ENCODE measurements at regions of chr20 and their contacts with region 1.

Region 1: DNA sequence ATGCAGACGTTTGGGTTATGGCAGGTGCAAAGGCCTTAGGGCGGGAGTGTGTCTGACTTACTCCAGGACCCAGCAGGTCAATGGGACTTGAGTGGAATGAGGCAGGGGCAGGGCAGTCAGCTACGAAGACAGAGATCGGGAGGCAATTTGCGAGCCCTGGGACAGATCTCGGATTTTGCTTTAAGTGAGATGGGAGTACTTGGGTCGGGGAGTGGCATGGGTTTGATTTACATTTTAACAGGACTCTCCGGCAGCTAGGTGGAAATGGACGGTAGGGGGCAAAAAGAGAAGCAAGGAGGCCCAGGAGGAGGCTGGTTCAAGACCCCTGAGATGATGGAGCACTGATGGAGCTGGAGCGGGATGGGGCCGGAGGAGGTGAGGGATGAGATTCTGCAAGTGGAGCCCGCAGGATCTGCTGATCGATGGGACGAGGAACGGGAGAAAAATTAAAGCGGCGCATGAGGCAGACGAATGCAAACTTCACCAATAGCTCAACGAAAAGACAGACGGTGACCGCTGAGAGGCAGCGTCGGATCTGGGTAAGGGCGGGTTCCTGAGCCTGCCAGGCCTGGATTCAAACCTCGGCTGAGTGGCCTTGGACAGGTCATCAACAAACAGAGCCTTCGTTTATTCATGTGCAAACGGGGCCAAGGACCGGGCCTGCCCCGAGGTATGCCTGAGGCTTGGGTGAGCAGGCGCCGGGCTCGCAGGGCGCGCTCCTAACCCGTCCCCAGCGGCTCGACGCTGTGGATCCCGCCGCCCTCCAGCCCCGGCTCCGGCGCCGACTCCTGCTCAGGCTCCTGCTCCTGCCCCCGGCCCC is 756 bp upstream of the RBCK1 start:
- DNase-seq: peak in 2 of 5 donors; percentile 26 to 75
- H3K4me3 ChIP-seq: peak overlapping the region; percentile 37 to 48
- H3K4me3 Mint-ChIP-seq: peak overlapping the region; percentile 88 to 93 (median 91)
- H3K27ac ChIP-seq: peak overlapping the region; percentile 63
- H3K27ac Mint-ChIP-seq: peak overlapping the region; percentile 91 to 98 (median 97)
- H3K4me1 ChIP-seq: peaks cover 35% of the 10 kb centered on the region
- H3K4me1 Mint-ChIP-seq: peaks cover 32 to 50% (median 44%) of the 10 kb centered on the region in 4 donors
- H3K27me3 ChIP-seq: no peaks in the 10 kb centered on the region
- H3K27me3 Mint-ChIP-seq: no peaks in the 10 kb centered on the region

Region 2: GRCh38 chr20:335686-336439 is 71.5 kb before region 1 on chr20:
- CTCF ChIA-PET with region 1: no interaction called
- POLR2A ChIA-PET with region 1: no interaction called
- intact Hi-C with region 1: no loop called
- DNase-seq: no peak
- H3K4me3 ChIP-seq: no peak overlapping the region
- H3K4me3 Mint-ChIP-seq: no peak overlapping the region
- H3K27ac ChIP-seq: no peak overlapping the region
- H3K27ac Mint-ChIP-seq: peak overlapping the region in 1 of 7 donors; percentile 65
- H3K4me1 ChIP-seq: no peaks in the 10 kb centered on the region
- H3K4me1 Mint-ChIP-seq: no peaks in the 10 kb centered on the region
- H3K27me3 ChIP-seq: no peaks in the 10 kb centered on the region
- H3K27me3 Mint-ChIP-seq: no peaks in the 10 kb centered on the region

Region 3: DNA sequence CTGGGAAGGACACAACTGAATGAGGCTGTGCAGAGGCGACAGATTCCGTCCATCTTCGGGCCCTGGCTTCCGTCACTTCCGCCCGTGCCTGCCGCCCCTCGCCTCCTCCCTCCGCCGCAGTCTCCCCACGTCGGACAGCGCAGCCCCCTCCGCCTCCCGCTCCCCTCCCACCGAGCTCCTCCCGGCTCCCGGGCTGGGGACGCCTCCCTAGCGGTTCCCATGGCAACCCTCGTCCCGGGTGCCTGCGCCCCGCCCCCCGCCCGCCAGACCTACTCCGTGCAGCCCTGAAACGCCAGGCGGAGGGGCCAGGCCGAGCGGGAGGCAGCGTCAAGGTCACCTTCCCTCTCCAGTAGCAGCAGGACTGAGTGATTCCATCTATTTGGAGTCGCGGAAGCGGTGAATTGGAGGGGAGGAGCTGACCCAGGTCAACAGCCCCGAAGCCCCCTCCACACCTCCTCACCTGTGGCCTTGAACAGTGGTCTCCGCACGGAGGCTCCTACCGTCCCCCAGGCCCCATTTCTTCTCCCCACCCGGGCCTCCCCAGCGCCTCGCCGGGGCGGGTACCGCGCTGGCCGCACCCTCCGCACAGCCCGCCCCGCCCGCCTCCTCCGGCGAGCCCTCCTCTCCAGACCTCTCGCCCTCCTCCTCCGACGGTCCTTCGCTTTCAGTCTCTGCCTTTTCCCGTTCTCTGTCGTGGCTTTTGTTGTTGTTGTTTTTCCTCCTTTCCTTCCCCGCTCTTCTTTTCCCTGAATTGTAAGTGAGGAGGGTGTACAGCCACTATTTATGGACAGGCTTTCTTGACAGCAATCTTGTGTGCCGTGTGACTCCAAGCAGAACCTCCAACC is 59.5 kb before region 1 on chr20:
- CTCF ChIA-PET with region 1: no interaction called
- POLR2A ChIA-PET with region 1: no interaction called
- intact Hi-C with region 1: loop called (anchors 1 kb)
- DNase-seq: peak; percentile 32 to 62 (median 36)
- H3K4me3 ChIP-seq: peak overlapping the region; percentile 57 to 81
- H3K4me3 Mint-ChIP-seq: peak overlapping the region; percentile 80 to 92 (median 89)
- H3K27ac ChIP-seq: peak overlapping the region; percentile 18
- H3K27ac Mint-ChIP-seq: peak overlapping the region in 6 of 7 donors; percentile 6 to 89 (median 60)
- H3K4me1 ChIP-seq: peaks cover 16% of the 10 kb centered on the region
- H3K4me1 Mint-ChIP-seq: peaks cover 10 to 16% (median 13%) of the 10 kb centered on the region in 4 donors
- H3K27me3 ChIP-seq: no peaks in the 10 kb centered on the region
- H3K27me3 Mint-ChIP-seq: no peaks in the 10 kb centered on the region

Region 4: GRCh38 chr20:381581-382290 is 25.6 kb before region 1 on chr20:
- CTCF ChIA-PET with region 1: interaction called, 4 read pairs
- POLR2A ChIA-PET with region 1: interaction called, 13 read pairs
- intact Hi-C with region 1: loop called (anchors 1 kb)
- DNase-seq: peak; percentile 60 to 81 (median 67)
- H3K4me3 ChIP-seq: peak overlapping the region; percentile 29 to 62
- H3K4me3 Mint-ChIP-seq: peak overlapping the region; percentile 79 to 89 (median 85)
- H3K27ac ChIP-seq: no peak overlapping the region
- H3K27ac Mint-ChIP-seq: peak overlapping the region; percentile 73 to 90 (median 84)
- H3K4me1 ChIP-seq: peaks cover 8% of the 10 kb centered on the region
- H3K4me1 Mint-ChIP-seq: peaks cover 5 to 20% (median 8%) of the 10 kb centered on the region in 4 donors
- H3K27me3 ChIP-seq: no peaks in the 10 kb centered on the region
- H3K27me3 Mint-ChIP-seq: no peaks in the 10 kb centered on the region

Region 5: DNA sequence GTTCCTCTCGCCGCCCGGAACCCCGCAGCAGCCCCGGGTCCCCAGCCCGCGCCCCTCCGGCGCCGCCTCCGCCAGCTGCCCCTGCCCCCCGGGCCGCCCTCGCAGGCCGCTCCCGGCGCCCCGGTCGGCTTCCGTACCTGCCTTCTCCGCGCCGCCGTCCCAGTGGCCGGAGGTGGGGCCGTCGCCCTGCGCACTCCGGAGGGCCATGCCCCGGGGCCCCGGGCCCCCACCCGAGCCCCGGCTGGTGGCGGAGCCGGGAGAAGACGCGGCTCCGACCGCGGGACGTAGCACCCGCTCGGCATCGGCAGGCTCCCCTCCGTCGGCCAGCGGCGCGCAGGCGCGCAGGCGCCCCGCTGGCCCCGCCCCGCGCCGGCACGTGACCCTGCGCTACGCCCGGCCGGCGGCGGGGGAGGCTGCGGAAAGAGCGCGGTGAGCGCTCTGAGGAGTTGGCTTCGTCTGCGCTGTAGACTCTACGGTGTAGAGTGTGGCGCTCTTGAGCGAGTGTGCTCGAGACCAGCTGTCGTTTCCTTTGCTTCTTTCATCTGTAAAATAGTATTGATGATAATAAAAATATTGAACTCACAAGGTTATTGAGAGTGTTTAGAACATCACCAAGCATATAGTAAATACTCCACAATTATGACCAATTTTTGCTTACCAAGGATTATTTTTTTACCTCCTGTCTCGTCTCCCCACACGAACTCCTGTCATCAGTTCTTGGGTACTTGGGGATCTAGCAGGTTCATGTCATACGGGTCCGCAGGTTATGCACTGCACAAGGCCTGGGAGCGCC is 55.1 kb after region 1 on chr20 and contains the start of gene TBC1D20:
- CTCF ChIA-PET with region 1: interaction called, 5 read pairs
- POLR2A ChIA-PET with region 1: interaction called, 16 read pairs
- intact Hi-C with region 1: loop called (anchors 1 kb)
- DNase-seq: peak; percentile 80 to 90 (median 89)
- H3K4me3 ChIP-seq: peak within 1 kb of the TSS; percentile 70 to 76
- H3K4me3 Mint-ChIP-seq: peak within 1 kb of the TSS; percentile 97 to 99 (median 98)
- H3K27ac ChIP-seq: peak within 1 kb of the TSS; percentile 84
- H3K27ac Mint-ChIP-seq: peak within 1 kb of the TSS; percentile 91 to 98 (median 97)
- H3K4me1 ChIP-seq: peaks cover 37% of the 10 kb centered on the region
- H3K4me1 Mint-ChIP-seq: peaks cover 30 to 49% (median 41%) of the 10 kb centered on the region in 4 donors
- H3K27me3 ChIP-seq: no peaks in the 10 kb centered on the region
- H3K27me3 Mint-ChIP-seq: peaks cover 0 to 2% of the 10 kb centered on the region in 2 donors
- total RNA-seq, gene TBC1D20: 42.1 to 42.9 TPM

Region 6: DNA sequence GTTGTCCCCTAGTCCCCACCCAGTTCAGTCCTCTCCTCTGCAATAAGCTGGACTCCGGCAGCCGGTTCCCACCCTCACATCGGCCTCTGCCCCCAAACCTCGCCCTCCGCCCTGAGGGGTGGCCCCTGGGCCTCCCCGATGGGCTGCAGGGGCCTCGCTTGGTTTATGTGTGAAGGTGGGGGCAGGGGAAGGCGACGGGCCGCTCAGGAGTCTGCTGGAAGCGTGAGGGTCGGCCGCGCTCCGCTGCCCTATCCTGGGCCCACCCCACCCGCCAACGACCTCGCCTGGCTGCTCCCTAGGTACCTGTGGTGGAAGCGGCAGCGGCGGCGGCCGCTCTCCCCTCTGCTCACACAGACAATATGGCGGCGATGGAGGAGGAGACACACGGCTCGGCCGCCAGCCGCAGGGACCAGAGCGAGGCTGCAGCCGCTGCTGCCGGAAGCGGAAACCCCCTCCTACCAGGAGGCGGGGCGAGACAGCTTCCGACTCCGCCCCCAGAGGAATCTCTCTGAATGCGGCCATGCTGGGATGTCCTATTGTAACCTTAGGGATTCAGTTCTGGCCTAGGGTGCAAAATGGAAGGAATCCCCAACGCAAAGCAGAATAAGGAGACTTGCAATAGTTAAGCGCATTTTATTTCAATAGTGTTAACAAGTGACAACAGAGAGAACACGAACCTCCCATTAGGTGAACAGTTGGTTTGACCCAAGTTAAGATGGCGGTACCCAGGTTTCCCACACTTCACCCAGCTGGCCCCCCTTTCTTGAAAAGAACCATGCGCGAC is 136.2 kb after region 1 on chr20 and contains the start of gene CSNK2A1:
- CTCF ChIA-PET with region 1: no interaction called
- POLR2A ChIA-PET with region 1: interaction called, 13 read pairs
- intact Hi-C with region 1: loop called (anchors 1 kb)
- DNase-seq: peak; percentile 94 to 99 (median 97)
- H3K4me3 ChIP-seq: peak within 1 kb of the TSS; percentile 45 to 93
- H3K4me3 Mint-ChIP-seq: peak within 1 kb of the TSS; percentile 85 to 100 (median 92)
- H3K27ac ChIP-seq: peak within 1 kb of the TSS; percentile 80
- H3K27ac Mint-ChIP-seq: peak within 1 kb of the TSS; percentile 98 to 100 (median 99)
- H3K4me1 ChIP-seq: peaks cover 50% of the 10 kb centered on the region
- H3K4me1 Mint-ChIP-seq: peaks cover 28 to 56% (median 43%) of the 10 kb centered on the region in 4 donors
- H3K27me3 ChIP-seq: no peaks in the 10 kb centered on the region
- H3K27me3 Mint-ChIP-seq: peaks cover 0 to 5% of the 10 kb centered on the region in 2 donors
- total RNA-seq, gene CSNK2A1: 81.6 to 87.8 TPM

Region 7: GRCh38 chr20:872855-873521 is 465.6 kb after region 1 on chr20:
- CTCF ChIA-PET with region 1: no interaction called
- POLR2A ChIA-PET with region 1: no interaction called
- intact Hi-C with region 1: no loop called
- DNase-seq: no peak
- H3K4me3 ChIP-seq: no peak overlapping the region
- H3K4me3 Mint-ChIP-seq: no peak overlapping the region
- H3K27ac ChIP-seq: no peak overlapping the region
- H3K27ac Mint-ChIP-seq: peak overlapping the region in 1 of 7 donors; percentile 50
- H3K4me1 ChIP-seq: no peaks in the 10 kb centered on the region
- H3K4me1 Mint-ChIP-seq: peaks cover 0 to 4% (median 1%) of the 10 kb centered on the region in 4 donors
- H3K27me3 ChIP-seq: no peaks in the 10 kb centered on the region
- H3K27me3 Mint-ChIP-seq: peaks cover 0 to 3% of the 10 kb centered on the region in 2 donors